ENCODE measurements at regions of chr6 and their contacts with region 1.

Region 1: GRCh38 chr6:30640476-30640875 is 6.5 kb upstream of the C6orf136 start:
- DNase-seq: peak in 2 of 3 donors; percentile 48 to 57
- H3K4me3 ChIP-seq: no peak overlapping the region
- H3K27ac ChIP-seq: no peak overlapping the region
- H3K4me1 ChIP-seq: peaks cover 4 to 44% (median 34%) of the 10 kb centered on the region in 4 experiments
- H3K27me3 ChIP-seq: no peaks in the 10 kb centered on the region

Region 2: DNA sequence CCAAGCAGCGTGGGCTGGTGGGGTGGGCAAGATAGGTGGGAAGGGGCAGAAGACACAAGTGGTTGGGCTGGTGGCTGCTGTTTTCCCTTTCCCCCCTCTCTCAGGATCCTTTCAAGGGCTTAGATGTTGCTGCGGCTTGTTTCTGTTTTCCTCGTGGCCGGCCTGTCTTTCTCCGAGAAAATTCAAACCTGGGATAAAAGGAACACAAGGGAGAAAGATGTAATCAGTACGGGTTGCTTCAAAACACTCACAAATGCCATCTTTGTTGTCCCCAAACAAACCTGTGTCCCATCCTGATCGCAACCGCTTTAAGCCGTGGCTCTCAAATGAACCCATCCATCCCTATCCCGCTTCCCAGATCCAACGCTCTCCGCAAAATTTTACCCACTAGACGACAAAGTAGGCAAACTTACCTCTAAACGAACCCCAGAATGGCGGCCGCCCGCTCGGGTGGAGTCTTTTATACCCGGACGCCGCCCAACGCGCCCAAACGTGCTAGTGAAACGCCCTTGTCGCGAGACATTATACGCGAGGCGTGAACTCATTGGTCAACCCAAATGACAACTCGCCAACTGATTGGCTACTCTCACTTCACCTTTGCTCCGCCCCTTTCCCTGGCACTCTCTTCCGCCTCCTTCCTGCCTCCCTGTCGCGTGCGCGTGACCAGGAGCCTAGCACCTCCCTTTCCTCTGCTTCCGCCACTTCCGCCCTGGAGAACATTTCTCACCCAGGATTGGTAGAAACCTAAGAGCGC is 23.5 kb before region 1 on chr6 and contains the start of gene PPP1R10:
- CTCF ChIA-PET with region 1: interaction called, 12 read pairs
- POLR2A ChIA-PET with region 1: interaction called, 7 read pairs
- DNase-seq: peak; percentile 100
- H3K4me3 ChIP-seq: peak within 1 kb of the TSS; percentile 74 to 100 (median 100)
- H3K27ac ChIP-seq: peak within 1 kb of the TSS; percentile 100
- H3K4me1 ChIP-seq: peaks cover 18 to 42% (median 29%) of the 10 kb centered on the region in 4 experiments
- H3K27me3 ChIP-seq: no peaks in the 10 kb centered on the region

Region 3: DNA sequence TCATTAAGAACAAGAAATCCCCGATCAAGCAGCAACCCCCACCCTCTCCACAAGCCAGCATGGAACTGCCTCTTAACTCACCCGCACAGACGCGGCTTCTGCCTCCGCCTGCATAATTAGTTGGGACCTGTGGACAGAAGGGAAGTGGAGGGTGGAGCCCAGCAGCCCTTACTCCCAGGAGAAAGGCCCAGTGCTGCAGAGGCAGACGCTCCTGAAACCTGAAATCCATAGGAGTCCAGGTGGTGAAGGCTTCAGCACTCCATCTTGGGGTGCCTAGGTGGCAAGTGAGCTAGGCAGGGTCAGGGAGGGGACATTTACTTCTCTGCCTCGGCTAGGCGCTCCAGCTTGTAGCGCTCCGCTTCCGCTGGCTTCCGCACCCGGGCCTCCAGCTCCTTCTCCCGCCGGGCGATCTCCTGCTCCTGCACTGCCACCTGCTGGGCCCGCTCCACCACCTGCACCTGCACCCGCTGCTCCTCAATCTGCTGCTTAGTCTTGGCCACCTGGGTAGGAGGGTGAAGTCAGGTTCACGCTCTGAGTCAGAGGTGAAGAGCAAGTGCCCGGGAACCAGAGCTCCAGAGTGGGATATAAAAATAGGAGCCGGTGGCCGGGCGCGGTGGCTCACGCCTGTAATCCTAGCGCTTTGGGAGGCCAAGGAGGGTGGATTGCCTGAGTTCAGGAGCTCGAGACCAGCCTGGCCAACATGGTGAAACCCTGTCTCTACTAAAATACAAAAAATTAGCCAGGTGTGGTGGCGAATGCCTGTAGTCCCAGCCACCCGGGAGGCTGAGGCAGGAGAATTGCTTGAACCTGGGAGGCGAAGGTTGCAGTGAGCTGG is 90.3 kb after region 1 on chr6:
- CTCF ChIA-PET with region 1: interaction called, 10 read pairs
- POLR2A ChIA-PET with region 1: interaction called, 3 read pairs
- DNase-seq: peak; percentile 79 to 86 (median 85)
- H3K4me3 ChIP-seq: peak overlapping the region in 3 of 7 experiments; percentile 31 to 42 (median 41)
- H3K27ac ChIP-seq: no peak overlapping the region
- H3K4me1 ChIP-seq: peaks cover 0 to 26% (median 14%) of the 10 kb centered on the region in 4 experiments
- H3K27me3 ChIP-seq: no peaks in the 10 kb centered on the region

Measured in common myeloid progenitor, CD34-positive (primary cell).